ENCODE measurements at regions of chr6 and their contacts with region 1.

Region 1: DNA sequence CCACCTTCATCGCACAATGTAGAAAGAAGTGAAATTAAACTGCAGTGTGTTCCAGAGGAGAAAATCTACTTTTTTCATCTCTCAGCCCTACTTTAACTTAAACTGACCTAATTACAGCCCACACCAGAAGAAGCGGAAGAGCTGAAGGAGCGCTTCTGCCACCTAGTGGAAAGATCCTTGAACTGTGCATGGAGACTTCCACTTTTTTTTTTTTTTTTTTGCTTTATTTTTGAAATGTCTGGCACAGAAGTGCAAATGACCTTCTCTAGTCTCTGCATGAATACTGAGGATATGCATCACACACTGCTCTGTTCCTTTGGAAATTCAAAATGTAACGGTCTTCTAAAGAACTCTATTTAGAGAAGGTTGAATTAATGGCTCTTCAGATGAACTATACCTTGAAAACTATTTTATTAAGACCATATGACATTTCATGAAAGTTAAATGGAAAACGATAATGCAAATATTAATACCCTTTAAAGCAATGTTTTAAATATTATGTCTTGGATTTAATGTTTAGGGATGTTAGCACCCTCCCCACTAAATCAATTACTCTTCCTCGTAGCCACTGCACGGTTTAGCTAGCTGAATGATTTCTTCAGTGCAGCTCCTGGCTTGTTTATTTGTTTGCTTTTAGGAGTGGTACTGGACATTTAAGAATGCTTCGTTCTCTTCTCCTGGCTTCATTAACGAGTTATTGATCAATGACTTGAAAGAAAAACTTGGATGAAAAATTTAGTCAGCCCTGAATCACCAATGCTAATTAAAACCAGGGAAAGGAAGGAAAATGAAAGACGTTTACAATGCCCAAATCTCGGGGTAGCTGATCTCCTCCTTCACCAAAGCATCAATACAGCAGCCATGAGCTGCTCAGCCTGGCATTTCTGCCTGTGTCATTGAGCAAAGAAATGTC is 569.6 kb upstream of the GJE1 start:
- DNase-seq: peak; percentile 69
- H3K4me3 Mint-ChIP-seq: peak overlapping the region; percentile 64
- H3K27ac Mint-ChIP-seq: peak overlapping the region; percentile 78
- H3K4me1 Mint-ChIP-seq: peaks cover 14% of the 10 kb centered on the region
- H3K27me3 Mint-ChIP-seq: peaks cover 3% of the 10 kb centered on the region

Region 2: GRCh38 chr6:139881728-139882211 is 1681.3 kb before region 1 on chr6:
- CTCF ChIA-PET with region 1: no interaction called
- intact Hi-C with region 1: loop called (anchors 2 kb)
- DNase-seq: peak; percentile 46
- H3K4me3 Mint-ChIP-seq: no peak overlapping the region
- H3K27ac Mint-ChIP-seq: no peak overlapping the region
- H3K4me1 Mint-ChIP-seq: peaks cover 4% of the 10 kb centered on the region
- H3K27me3 Mint-ChIP-seq: no peaks in the 10 kb centered on the region

Region 3: DNA sequence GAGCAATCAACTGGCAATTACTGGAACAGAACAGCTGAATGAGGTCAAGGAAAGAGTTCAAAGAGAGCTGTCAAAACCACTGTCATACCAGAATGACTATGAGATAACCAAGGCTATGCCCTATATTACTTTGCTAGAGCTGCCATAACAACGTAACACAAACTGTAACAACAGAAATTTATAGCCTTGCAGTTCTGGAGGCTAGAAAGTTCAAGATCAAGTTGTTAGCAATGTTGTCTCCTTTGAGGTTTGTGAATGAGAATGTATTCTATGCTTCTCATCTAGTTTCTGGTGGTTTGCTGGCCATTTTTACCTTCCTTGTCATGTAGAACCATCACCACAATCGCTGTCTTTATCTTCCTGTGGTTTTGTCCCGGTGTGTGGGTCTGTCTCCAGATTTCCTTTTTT is 753.4 kb before region 1 on chr6:
- CTCF ChIA-PET with region 1: no interaction called
- intact Hi-C with region 1: loop called (anchors 10 kb)
- DNase-seq: no peak
- H3K4me3 Mint-ChIP-seq: no peak overlapping the region
- H3K27ac Mint-ChIP-seq: no peak overlapping the region
- H3K4me1 Mint-ChIP-seq: peaks cover 5% of the 10 kb centered on the region
- H3K27me3 Mint-ChIP-seq: peaks cover 3% of the 10 kb centered on the region

Region 4: DNA sequence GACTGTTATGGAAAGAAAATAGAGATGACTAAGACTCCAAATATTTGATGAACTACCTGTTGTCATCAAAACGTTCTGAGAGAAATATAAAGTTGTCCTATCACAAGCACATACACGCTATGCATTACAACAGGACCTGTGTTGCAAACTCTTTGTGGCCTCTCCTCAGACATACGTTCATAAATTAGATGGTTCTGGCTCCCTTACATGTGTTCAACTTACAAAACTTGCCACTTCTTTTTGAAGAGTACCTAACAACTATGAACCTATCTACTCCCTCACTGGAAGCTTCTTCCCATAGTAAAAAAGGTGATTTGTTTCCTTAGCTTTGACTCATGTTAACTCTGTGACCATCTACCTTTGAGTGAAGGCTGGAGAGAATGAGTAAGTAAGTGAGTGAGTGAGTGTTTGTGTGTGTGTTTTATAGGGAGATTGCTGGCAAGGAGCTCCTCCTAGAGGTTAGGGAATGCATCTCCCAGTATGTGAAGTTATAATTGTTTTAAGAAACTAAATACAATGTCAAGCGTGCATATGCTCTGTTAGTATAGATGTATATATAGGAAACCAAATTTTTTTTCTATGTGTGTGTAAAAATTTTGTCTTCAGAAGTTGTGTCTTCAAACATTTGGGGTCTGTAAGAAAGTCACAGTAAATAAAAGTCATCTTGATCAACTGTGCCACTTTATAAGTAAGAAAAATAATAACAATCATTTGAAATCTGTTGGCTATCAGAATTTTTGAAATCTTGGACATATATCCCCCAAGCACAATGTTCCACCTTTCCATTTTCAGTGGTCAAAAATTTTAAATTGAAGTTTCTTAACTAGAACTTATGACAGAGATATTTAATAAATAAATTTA is 641.5 kb before region 1 on chr6:
- CTCF ChIA-PET with region 1: no interaction called
- intact Hi-C with region 1: loop called (anchors 10 kb)
- DNase-seq: peak; percentile 32
- H3K4me3 Mint-ChIP-seq: no peak overlapping the region
- H3K27ac Mint-ChIP-seq: no peak overlapping the region
- H3K4me1 Mint-ChIP-seq: no peaks in the 10 kb centered on the region
- H3K27me3 Mint-ChIP-seq: peaks cover 8% of the 10 kb centered on the region

Region 5: GRCh38 chr6:141153563-141153962 is 409.5 kb before region 1 on chr6:
- CTCF ChIA-PET with region 1: no interaction called
- intact Hi-C with region 1: loop called (anchors 5 kb)
- DNase-seq: peak; percentile 66
- H3K4me3 Mint-ChIP-seq: no peak overlapping the region
- H3K27ac Mint-ChIP-seq: peak overlapping the region; percentile 56
- H3K4me1 Mint-ChIP-seq: peaks cover 24% of the 10 kb centered on the region
- H3K27me3 Mint-ChIP-seq: no peaks in the 10 kb centered on the region

Region 6: GRCh38 chr6:141309295-141309694 is 253.8 kb before region 1 on chr6:
- CTCF ChIA-PET with region 1: no interaction called
- intact Hi-C with region 1: loop called (anchors 1 kb)
- DNase-seq: peak; percentile 7
- H3K4me3 Mint-ChIP-seq: no peak overlapping the region
- H3K27ac Mint-ChIP-seq: no peak overlapping the region
- H3K4me1 Mint-ChIP-seq: peaks cover 11% of the 10 kb centered on the region
- H3K27me3 Mint-ChIP-seq: no peaks in the 10 kb centered on the region

Region 7: DNA sequence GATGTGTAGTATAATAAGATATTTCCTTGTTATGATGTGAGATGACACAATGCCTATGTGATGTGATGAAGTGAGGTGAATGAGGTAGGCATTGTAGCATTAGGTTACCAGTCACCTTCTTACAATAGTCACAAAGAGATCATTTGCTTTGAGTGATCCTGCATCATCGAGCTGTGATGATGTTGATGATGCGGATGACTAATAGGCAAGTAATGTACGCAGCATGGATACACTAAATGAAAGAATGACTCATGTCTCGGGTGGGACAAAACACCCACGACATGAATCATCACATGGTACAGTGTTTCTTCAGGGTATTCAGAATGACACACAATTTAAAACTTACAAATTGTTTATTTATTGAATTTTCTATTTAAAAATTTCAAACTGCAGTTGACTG is 236.7 kb before region 1 on chr6:
- CTCF ChIA-PET with region 1: interaction called, 3 read pairs
- intact Hi-C with region 1: loop called (anchors 5 kb)
- DNase-seq: peak; percentile 80
- H3K4me3 Mint-ChIP-seq: no peak overlapping the region
- H3K27ac Mint-ChIP-seq: no peak overlapping the region
- H3K4me1 Mint-ChIP-seq: peaks cover 15% of the 10 kb centered on the region
- H3K27me3 Mint-ChIP-seq: no peaks in the 10 kb centered on the region

Region 8: DNA sequence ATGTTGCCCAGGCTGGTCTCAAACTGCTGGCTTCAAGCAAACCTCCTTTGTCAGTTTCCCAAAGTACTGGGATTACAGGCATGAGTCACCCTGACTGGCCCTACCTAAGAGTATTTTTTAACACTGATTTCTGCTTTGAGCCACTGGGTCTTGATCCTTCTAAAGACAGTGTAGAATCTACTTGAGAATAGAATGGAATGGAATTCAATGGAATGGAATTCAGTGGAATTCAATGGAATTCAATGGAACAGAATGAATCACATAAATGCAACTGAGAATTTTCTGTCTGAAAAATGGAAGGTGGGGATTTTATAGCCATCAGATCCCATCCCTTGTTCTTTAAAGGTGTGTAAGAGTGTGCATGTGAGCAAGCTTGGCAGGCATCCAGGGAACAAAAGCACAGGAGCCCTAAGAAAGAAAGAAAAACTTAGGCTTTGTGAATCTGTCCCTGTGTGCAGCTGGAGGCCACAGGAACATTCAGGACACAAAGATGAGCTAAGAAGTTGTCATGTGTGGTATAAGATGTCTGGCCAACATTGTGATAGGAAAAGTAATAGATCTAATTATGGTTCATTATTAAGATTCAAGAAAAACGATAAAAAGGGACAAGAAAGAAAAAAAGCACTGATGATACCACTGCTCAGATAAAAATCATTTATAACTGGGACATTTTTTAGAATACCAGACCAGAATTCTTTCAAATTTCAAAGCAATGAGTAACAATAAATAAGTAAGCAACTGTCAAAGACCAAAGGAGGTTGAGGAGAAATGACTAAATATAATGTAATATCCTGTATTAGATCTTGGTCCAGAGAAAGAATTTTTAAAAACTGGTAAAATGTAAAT is 111.4 kb before region 1 on chr6:
- CTCF ChIA-PET with region 1: no interaction called
- intact Hi-C with region 1: no loop called
- DNase-seq: no peak
- H3K4me3 Mint-ChIP-seq: no peak overlapping the region
- H3K27ac Mint-ChIP-seq: no peak overlapping the region
- H3K4me1 Mint-ChIP-seq: no peaks in the 10 kb centered on the region
- H3K27me3 Mint-ChIP-seq: no peaks in the 10 kb centered on the region